ENCODE measurements at regions of chr3 and their contacts with region 1.

Region 1: DNA sequence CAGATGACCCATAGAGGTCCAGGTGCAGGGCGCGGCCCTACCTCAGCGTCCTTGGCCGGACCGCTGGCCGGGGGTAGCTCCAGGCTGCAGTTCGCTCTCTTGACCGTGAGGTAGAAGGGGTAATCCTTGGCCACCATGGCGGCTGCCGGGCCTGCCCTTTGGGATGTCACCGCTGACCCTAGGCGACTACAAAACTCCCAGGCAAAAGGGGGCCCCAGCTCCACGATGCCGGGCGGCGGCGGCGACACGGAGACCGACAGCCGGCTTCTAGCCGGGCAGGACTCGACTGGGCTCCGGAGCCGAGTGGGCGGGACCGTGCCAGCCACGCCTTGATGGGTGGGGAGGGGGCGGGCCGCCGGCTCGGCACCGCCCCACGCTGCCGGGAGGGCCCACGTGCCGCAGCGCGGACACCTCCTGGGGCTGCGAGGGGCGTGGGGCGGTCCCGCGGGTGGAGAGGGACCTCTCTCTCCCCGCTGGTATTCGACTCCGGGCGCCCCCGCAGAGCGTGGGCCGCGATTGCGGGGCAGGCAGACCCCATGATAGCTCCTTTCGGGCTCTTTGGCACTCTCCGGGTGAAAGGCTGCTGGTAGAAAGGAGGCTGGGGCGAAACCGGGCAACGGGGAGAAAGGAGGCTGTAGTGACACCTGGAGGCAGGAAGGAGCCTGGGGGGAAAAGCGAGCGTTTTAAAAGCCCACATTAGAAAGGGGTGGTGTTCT is at the start of gene ARHGEF3:
- DNase-seq: peak; percentile 82 to 97 (median 91)
- ATAC-seq: peak; percentile 85 to 93 (median 91)
- H3K4me3 ChIP-seq: peak within 1 kb of the TSS; percentile 79 to 91 (median 85)
- H3K27ac ChIP-seq: peak within 1 kb of the TSS; percentile 21 to 85 (median 52)
- H3K4me1 ChIP-seq: peaks cover 0 to 27% (median 8%) of the 10 kb centered on the region in 3 donors
- H3K27me3 ChIP-seq: no peaks in the 10 kb centered on the region
- CTCF ChIP-seq: peak in 3 of 4 donors; percentile 23 to 34 (median 32)
- total RNA-seq, gene ARHGEF3: 12.6 to 36.5 (median 26.8) TPM

Region 2: DNA sequence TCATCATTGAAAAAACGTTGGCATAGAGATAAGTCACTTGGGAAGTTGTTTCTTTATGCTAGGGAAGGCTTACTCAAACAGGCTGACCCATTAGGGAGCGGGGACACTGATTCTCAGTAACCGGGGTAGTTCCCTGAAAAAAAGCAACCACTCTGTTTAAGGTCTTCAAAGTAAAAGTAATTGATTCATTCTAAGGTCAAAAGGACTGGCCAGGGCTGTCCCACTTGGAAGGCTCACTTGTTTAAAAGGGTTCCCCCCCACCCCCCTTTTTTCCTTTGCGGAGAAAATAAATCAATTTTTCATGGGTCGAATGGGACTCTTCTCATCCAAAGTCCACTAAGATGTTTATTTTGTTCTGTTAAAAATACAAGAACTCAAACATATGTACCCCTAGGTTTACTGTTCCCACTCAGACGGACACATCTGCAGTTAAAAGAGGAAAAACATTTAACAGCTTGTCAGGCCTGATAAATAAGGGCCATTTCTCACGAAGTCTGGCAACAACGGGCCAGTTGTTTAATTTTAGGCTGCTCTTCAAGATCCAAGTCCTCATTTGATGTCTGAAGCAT is 53.1 kb before region 1 on chr3:
- intact Hi-C with region 1: loop called in 2 of 3 experiments (anchors 10 kb)
- DNase-seq: peak in 3 of 6 donors; percentile 20 to 60 (median 51)
- ATAC-seq: peak; percentile 68 to 82 (median 76)
- H3K4me3 ChIP-seq: no peak overlapping the region
- H3K27ac ChIP-seq: peak overlapping the region; percentile 19 to 69 (median 32)
- H3K4me1 ChIP-seq: peaks cover 15 to 39% (median 38%) of the 10 kb centered on the region in 3 donors
- H3K27me3 ChIP-seq: no peaks in the 10 kb centered on the region
- CTCF ChIP-seq: no peak

Region 3: DNA sequence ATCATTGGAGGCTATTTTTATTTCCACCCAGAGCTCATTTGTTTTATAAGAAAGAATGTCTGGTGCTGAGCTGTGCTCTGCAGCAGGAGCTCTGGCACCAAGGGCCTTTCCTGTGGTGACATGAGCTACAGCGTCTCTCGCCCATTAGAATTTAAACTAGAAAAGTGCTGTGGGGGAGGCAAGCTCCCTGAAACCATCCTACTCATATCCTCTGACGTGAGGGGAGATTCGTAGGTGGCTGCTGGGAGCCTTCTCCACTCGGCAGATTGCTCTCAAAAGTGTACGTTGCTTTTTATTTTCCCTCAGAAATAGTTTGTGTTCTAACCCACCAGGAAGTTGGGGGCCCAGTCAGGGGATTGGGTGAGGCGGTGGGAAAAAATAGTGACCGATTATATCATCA is 76.3 kb after region 1 on chr3:
- intact Hi-C with region 1: no loop called
- DNase-seq: no peak
- ATAC-seq: no peak
- H3K4me3 ChIP-seq: no peak overlapping the region
- H3K27ac ChIP-seq: no peak overlapping the region
- H3K4me1 ChIP-seq: no peaks in the 10 kb centered on the region
- H3K27me3 ChIP-seq: no peaks in the 10 kb centered on the region
- CTCF ChIP-seq: no peak

Region 4: DNA sequence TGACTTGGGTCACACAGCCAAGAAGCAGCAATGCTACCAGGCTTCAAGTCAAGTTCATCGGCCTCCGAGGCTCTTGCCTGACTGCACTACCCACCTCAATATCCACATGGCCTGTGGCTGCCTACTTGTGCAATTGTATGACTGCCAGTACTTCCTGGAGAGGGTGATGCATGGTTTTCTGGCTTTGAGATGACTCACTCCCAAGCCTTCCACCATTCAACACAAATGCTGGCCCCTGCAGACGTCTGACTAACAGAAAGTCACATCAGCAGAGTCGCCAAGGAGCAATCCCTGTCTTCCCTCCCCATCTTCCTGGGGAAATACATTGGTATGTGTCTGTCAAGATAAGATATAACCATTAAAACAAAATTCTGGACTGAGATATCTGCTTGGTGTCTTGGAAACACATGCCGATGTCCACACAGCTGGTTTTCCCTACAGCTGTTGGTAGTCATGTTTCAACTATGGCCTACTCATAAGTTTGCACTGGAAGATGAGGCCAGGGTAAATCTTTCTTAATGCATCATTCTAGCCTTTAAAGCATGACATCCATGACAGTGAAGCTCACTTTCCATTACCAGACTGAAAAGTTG is 179.1 kb after region 1 on chr3:
- intact Hi-C with region 1: loop called in 1 of 3 experiments (anchors 5 kb)
- DNase-seq: no peak
- ATAC-seq: peak in 3 of 4 donors; percentile 63 to 84 (median 71)
- H3K4me3 ChIP-seq: no peak overlapping the region
- H3K27ac ChIP-seq: no peak overlapping the region
- H3K4me1 ChIP-seq: no peaks in the 10 kb centered on the region
- H3K27me3 ChIP-seq: no peaks in the 10 kb centered on the region
- CTCF ChIP-seq: no peak

Region 5: GRCh38 chr3:57598765-57599360 is 797.0 kb after region 1 on chr3:
- intact Hi-C with region 1: no loop called
- DNase-seq: no peak
- ATAC-seq: no peak
- H3K4me3 ChIP-seq: peak overlapping the region; percentile 23 to 96 (median 51)
- H3K27ac ChIP-seq: peak overlapping the region; percentile 85 to 98 (median 96)
- H3K4me1 ChIP-seq: peaks cover 0 to 6% (median 6%) of the 10 kb centered on the region in 3 donors
- H3K27me3 ChIP-seq: no peaks in the 10 kb centered on the region
- CTCF ChIP-seq: no peak